CD8-positive, alpha-beta T cell (primary cell): ENCODE measurements at regions of chr20 and their contacts with region 1.

Region 1: DNA sequence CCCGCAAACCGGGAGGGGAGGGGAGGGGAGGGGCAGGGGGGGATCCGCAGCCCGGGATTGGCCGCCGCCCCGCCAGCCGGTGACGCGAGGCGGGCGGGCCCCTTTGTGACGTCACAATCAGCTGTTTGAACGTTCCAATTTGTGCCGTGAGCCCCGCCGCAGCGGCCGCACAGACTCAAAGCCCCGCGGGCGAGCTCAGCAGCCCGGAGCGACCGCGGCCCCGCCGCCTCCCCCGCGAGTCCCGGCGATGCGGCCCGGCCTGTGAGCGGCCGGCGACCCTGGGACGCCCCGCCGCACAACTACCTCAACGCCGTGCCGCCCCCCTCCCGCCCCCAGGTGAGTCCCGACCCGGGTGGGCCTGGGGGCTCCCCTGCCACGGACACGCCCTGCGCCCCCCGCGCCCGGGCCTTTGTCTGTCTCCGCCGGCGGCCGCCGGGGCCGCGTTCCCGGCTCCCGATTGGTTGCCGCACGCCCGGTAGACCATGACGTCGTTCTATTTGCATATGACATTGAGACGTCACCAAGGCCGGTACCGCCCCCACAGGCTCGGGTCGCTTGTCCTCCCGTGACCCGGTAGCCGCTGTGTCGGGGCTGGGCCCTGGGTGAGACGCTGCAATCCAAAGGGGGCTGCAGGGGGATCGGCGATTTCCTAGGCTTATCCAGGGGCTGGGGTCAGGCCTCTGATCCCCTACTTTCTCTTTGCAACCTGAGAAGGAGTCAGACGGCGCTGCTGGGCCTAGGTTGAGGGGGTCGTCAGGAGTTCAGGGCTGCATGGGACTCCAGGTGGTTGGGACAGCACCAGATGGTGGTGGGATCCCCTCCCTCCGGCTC is at the start of gene TP53INP2:
- DNase-seq: peak; percentile 71 to 96 (median 87)
- ATAC-seq: peak; percentile 53
- H3K4me3 ChIP-seq: peak within 1 kb of the TSS; percentile 78 to 96
- H3K4me3 Mint-ChIP-seq: peak within 1 kb of the TSS; percentile 93
- H3K27ac ChIP-seq: peak within 1 kb of the TSS; percentile 71 to 96
- H3K27ac Mint-ChIP-seq: peak within 1 kb of the TSS; percentile 95
- H3K4me1 ChIP-seq: peaks cover 14% of the 10 kb centered on the region
- H3K4me1 Mint-ChIP-seq: peaks cover 22% of the 10 kb centered on the region
- H3K27me3 ChIP-seq: peaks cover 0 to 6% of the 10 kb centered on the region in 2 experiments
- H3K27me3 Mint-ChIP-seq: peaks cover 8% of the 10 kb centered on the region
- CTCF ChIP-seq: no peak
- total RNA-seq, gene TP53INP2: 101 to 103 TPM

Region 2: GRCh38 chr20:34363062-34363464 is 341.3 kb before region 1 on chr20 and contains the start of gene ITCH:
- CTCF ChIA-PET with region 1: no interaction called
- POLR2A ChIA-PET with region 1: no interaction called
- intact Hi-C with region 1: loop called in 1 of 2 experiments (anchors 1 kb)
- DNase-seq: peak; percentile 80 to 96 (median 93)
- ATAC-seq: peak; percentile 99
- H3K4me3 ChIP-seq: peak within 1 kb of the TSS; percentile 92 to 93
- H3K4me3 Mint-ChIP-seq: peak within 1 kb of the TSS; percentile 99
- H3K27ac ChIP-seq: peak within 1 kb of the TSS; percentile 86 to 91
- H3K27ac Mint-ChIP-seq: peak within 1 kb of the TSS; percentile 99
- H3K4me1 ChIP-seq: peaks cover 40% of the 10 kb centered on the region
- H3K4me1 Mint-ChIP-seq: peaks cover 45% of the 10 kb centered on the region
- H3K27me3 ChIP-seq: no peaks in the 10 kb centered on the region
- H3K27me3 Mint-ChIP-seq: no peaks in the 10 kb centered on the region
- CTCF ChIP-seq: no peak
- total RNA-seq, gene ITCH: 50.4 to 55.2 TPM

Region 3: DNA sequence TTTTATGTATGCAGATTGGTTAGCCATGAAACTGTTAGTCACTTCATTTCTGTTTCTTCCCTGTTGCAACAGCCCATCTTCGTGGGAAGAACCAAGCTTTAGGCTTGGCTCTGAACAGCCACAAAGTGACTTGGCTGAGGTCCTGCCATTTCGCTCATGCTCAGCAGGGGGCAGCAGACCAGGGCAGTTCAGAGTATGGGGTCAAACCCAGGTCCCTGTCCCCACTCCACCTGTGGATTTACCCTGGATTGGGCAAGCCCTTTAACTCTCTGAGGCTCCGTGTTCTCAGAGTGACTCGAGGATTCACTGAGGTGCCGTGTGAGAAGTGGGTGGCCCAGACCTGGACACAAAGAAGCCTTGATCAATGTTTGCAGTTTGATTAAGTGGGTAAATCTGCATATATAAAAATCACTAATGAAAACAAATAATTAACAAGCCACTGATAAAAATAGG is 165.7 kb before region 1 on chr20:
- CTCF ChIA-PET with region 1: interaction called, 13 read pairs
- POLR2A ChIA-PET with region 1: no interaction called
- intact Hi-C with region 1: loop called (anchors 1 kb)
- DNase-seq: peak in 8 of 9 experiments; percentile 15 to 65 (median 56)
- ATAC-seq: peak; percentile 67
- H3K4me3 ChIP-seq: no peak overlapping the region
- H3K4me3 Mint-ChIP-seq: no peak overlapping the region
- H3K27ac ChIP-seq: no peak overlapping the region
- H3K27ac Mint-ChIP-seq: no peak overlapping the region
- H3K4me1 ChIP-seq: no peaks in the 10 kb centered on the region
- H3K4me1 Mint-ChIP-seq: peaks cover 12% of the 10 kb centered on the region
- H3K27me3 ChIP-seq: no peaks in the 10 kb centered on the region
- H3K27me3 Mint-ChIP-seq: no peaks in the 10 kb centered on the region
- CTCF ChIP-seq: peak; percentile 83

Region 4: DNA sequence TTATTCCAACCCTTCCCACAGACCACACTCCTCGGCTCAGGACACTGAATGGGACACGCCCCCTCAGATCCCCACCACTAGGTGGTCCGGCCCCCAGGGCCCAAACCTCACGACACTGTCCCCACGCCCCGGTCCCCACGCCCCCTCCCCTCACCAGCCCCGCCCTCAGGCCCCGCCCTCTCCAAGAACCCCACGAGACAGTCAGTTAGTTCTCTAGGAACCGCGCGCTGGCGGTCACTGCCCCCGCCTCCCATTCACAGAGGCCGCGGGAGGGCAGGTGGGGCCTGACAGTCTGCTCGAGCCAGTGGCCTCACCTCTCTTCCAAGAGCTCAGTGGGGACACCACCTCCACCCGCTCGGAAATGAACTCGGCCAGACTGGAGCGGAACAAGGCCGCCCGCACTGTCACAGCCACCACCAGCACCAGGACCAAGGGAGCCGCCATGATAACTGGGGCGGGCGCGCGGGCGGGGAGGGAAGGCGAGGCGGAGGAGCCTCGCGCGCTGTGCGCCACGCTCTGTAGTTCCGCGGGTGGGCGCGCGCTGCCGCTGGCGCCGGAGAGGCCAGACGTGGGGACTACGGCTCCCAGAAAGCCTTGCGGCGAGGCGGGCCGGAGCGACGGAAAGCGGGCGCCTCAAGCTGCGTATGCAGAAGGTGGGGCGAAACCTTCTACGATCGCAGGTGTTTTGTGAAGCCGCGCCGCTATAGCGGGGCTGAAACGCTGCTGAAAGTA is 27.6 kb before region 1 on chr20 and contains the start of gene PIGU:
- CTCF ChIA-PET with region 1: interaction called, 3 read pairs
- POLR2A ChIA-PET with region 1: interaction called, 8 read pairs
- intact Hi-C with region 1: loop called (anchors 1 kb)
- DNase-seq: peak; percentile 92 to 98 (median 96)
- ATAC-seq: peak; percentile 96
- H3K4me3 ChIP-seq: peak within 1 kb of the TSS; percentile 80 to 94
- H3K4me3 Mint-ChIP-seq: peak within 1 kb of the TSS; percentile 97
- H3K27ac ChIP-seq: peak within 1 kb of the TSS; percentile 83 to 90
- H3K27ac Mint-ChIP-seq: peak within 1 kb of the TSS; percentile 96
- H3K4me1 ChIP-seq: peaks cover 16% of the 10 kb centered on the region
- H3K4me1 Mint-ChIP-seq: peaks cover 22% of the 10 kb centered on the region
- H3K27me3 ChIP-seq: no peaks in the 10 kb centered on the region
- H3K27me3 Mint-ChIP-seq: no peaks in the 10 kb centered on the region
- CTCF ChIP-seq: no peak
- total RNA-seq, gene PIGU: 3.3 to 5.2 TPM